Dendritic cell treated with granulocyte-macrophage colony-stimulating factor and Interleukin-4, amounts not matched to agents 40 ng/mL and 50 ng/mL, for 4 days (primary cell): ENCODE measurements at regions of chr12 and their contacts with region 1.

Region 1: DNA sequence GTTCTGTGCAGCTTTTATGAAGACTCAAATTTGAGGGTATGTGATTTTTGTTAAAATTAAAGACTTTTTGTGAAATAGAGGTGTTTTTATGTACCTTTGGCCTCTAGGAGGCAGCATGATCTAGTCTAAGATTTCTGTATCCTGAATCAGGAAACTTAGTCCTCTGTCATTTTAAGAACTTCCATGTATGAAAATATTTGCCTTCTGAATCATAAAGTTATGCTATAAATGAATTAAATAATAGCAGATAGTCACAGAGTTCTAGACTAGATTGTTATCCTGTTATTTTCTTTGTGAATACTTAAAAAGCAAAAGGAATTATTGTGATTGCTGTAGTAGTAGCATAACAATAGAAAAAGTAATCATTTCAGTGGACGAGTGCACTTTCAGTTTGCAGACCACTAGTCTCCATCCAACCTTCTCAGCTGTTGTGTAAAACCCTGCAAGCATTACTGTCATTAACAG is 56.3 kb downstream of the FGD4 start:
- H3K4me3 Mint-ChIP-seq: peak overlapping the region; percentile 52
- H3K27ac Mint-ChIP-seq: peak overlapping the region; percentile 27
- H3K4me1 Mint-ChIP-seq: peaks cover 15% of the 10 kb centered on the region
- H3K27me3 Mint-ChIP-seq: no peaks in the 10 kb centered on the region

Region 2: GRCh38 chr12:31859232-31859977 is 596.2 kb before region 1 on chr12:
- intact Hi-C with region 1: no loop called
- H3K4me3 Mint-ChIP-seq: no peak overlapping the region
- H3K27ac Mint-ChIP-seq: no peak overlapping the region
- H3K4me1 Mint-ChIP-seq: no peaks in the 10 kb centered on the region
- H3K27me3 Mint-ChIP-seq: no peaks in the 10 kb centered on the region

Region 3: GRCh38 chr12:32365473-32366064 is 90.1 kb before region 1 on chr12:
- intact Hi-C with region 1: loop called (anchors 5 kb)
- H3K4me3 Mint-ChIP-seq: no peak overlapping the region
- H3K27ac Mint-ChIP-seq: no peak overlapping the region
- H3K4me1 Mint-ChIP-seq: no peaks in the 10 kb centered on the region
- H3K27me3 Mint-ChIP-seq: no peaks in the 10 kb centered on the region

Region 4: GRCh38 chr12:32390572-32391219 is 64.9 kb before region 1 on chr12:
- intact Hi-C with region 1: no loop called
- H3K4me3 Mint-ChIP-seq: peak overlapping the region; percentile 65
- H3K27ac Mint-ChIP-seq: no peak overlapping the region
- H3K4me1 Mint-ChIP-seq: peaks cover 6% of the 10 kb centered on the region
- H3K27me3 Mint-ChIP-seq: peaks cover 24% of the 10 kb centered on the region

Region 5: GRCh38 chr12:32494656-32495055 is 39.0 kb after region 1 on chr12:
- intact Hi-C with region 1: loop called (anchors 5 kb)
- H3K4me3 Mint-ChIP-seq: no peak overlapping the region
- H3K27ac Mint-ChIP-seq: no peak overlapping the region
- H3K4me1 Mint-ChIP-seq: peaks cover 44% of the 10 kb centered on the region
- H3K27me3 Mint-ChIP-seq: no peaks in the 10 kb centered on the region

Region 6: GRCh38 chr12:32535288-32535999 is 79.8 kb after region 1 on chr12:
- intact Hi-C with region 1: loop called (anchors 5 kb)
- H3K4me3 Mint-ChIP-seq: peak overlapping the region; percentile 71
- H3K27ac Mint-ChIP-seq: peak overlapping the region; percentile 46
- H3K4me1 Mint-ChIP-seq: peaks cover 45% of the 10 kb centered on the region
- H3K27me3 Mint-ChIP-seq: no peaks in the 10 kb centered on the region

Region 7: DNA sequence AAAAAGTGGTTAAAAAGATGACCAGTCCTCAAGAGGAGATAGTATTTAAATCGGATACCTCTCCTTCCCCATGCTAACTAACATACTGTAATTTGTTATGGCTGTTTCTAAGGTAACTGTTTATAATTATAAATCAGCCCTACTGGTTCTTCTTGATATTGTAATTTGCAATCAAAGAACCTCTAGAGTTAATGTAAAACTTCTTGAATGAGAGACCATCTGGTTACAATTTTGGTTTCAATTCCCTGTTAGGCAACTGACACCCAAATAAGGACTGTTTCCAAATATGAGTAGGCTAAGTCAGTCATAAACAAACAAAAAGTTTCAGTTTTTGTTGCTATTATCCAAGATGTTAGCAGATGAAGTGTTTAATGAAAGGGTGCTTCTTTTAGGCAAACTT is 103.3 kb after region 1 on chr12:
- intact Hi-C with region 1: loop called (anchors 5 kb)
- H3K4me3 Mint-ChIP-seq: no peak overlapping the region
- H3K27ac Mint-ChIP-seq: no peak overlapping the region
- H3K4me1 Mint-ChIP-seq: peaks cover 56% of the 10 kb centered on the region
- H3K27me3 Mint-ChIP-seq: no peaks in the 10 kb centered on the region

Region 8: DNA sequence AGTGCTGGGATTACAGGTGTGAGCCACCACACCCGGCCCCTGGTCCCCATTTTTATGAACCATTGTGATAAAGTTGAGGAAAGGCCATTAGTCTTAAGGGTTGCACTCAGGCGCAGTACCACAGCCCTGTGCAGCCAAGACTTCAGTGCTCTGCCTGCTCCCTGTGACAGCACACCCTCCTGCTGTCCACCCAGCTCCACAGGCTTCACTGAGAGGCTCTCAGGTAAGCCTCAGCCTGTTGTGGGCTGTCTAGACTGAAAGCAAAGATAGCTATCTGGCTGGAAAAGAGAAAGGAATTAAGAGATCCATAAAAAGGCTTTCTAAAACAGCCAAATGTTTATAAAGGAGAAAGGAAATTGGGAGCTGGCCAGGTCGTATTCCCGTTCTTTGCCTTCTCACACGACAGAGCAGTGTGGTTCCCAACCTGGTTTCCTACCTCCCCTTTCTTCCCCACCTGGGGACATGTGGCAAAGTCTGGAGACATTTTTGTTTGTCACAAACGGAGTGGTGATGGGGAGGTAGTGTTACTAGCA is 204.3 kb after region 1 on chr12:
- intact Hi-C with region 1: loop called (anchors 1 kb)
- H3K4me3 Mint-ChIP-seq: no peak overlapping the region
- H3K27ac Mint-ChIP-seq: no peak overlapping the region
- H3K4me1 Mint-ChIP-seq: peaks cover 5% of the 10 kb centered on the region
- H3K27me3 Mint-ChIP-seq: no peaks in the 10 kb centered on the region

Region 9: GRCh38 chr12:32671930-32672780 is 216.5 kb after region 1 on chr12:
- intact Hi-C with region 1: loop called (anchors 5 kb)
- H3K4me3 Mint-ChIP-seq: no peak overlapping the region
- H3K27ac Mint-ChIP-seq: no peak overlapping the region
- H3K4me1 Mint-ChIP-seq: peaks cover 21% of the 10 kb centered on the region
- H3K27me3 Mint-ChIP-seq: no peaks in the 10 kb centered on the region

Region 10: GRCh38 chr12:32929056-32929455 is 473.4 kb after region 1 on chr12:
- intact Hi-C with region 1: no loop called
- H3K4me3 Mint-ChIP-seq: no peak overlapping the region
- H3K27ac Mint-ChIP-seq: no peak overlapping the region
- H3K4me1 Mint-ChIP-seq: no peaks in the 10 kb centered on the region
- H3K27me3 Mint-ChIP-seq: peaks cover 15% of the 10 kb centered on the region